Cardiac septum (tissue), 1 donor: ENCODE measurements at regions of chrX and their contacts with region 1.

Region 1: DNA sequence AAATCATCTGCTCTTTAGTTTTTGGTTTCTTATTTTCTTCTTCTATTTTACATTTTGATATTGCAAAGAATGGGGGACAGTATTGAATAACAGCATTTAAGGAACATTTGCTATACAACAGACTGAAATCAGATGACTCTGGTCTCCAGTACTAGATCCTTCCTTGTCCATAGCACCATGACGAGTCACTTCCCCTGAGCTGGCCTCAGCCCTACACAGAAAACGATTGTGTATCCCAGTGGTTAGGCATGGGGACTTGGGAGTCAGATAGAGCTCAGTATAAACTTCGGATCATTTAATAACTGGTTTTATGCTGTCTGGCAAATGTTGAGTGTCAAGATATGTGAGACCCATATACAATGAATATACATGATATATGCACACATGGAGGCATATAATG is 44.7 kb upstream of the BEX4 start:
- DNase-seq: no peak

Region 2: GRCh38 chrX:102643275-102643674 is 526.9 kb before region 1 on chrX:
- intact Hi-C with region 1: no loop called
- DNase-seq: no peak

Region 3: DNA sequence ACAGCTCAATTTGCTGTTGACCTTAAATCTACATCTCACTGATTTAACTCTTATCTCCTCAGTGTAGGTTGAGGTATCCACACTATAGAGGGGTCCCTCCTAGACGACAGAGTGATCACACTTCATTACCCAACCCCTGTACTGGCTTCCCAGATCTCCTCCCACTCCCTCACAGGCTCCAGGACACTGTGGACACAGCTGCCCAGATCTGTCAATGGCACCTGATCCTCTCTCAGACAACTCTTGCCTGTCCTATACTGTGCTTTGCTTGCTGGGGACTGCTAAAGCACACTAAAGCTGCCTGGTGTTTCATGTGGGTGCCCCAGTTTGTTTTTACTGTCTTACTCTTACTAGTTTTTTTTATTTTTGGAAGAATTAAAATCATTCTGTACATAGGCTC is 205.3 kb before region 1 on chrX:
- intact Hi-C with region 1: loop called (anchors 5 kb)
- DNase-seq: no peak